ENCODE measurements at regions of chr3 and their contacts with region 1.

Region 1: DNA sequence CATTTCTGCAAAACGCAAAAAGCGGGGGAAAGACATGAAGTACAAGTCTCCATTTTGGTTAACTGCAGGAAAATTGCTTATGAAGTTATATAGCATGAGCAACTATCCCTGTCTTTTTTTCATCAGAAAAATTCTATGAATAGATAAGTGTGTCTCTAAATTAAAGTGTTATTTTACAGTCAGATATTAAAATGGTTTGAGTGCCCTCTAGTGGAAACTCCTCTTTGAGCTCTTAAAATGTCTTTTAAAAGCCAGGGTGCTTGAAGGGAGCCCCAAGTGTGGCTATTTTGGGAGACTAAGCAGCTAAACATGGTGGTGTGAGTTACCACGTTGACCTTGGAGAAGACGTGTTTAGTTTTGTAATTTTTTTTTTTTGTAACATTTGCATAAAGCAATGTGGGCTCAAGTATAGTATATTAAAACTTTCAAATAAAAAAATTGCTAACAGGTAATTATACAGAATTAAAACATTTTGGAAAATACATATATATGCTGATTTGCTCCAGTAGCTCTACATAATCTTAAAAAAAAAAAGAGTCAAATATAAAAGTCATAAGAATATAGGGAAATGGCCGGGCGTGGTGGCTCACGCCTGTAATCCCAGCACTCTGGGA is 77.2 kb downstream of the PPP2R3A start:
- DNase-seq: no peak
- ATAC-seq: peak; percentile 44

Region 2: GRCh38 chr3:135918580-135918962 is 124.1 kb before region 1 on chr3:
- intact Hi-C with region 1: loop called (anchors 5 kb)
- DNase-seq: no peak
- ATAC-seq: peak; percentile 82

Region 3: DNA sequence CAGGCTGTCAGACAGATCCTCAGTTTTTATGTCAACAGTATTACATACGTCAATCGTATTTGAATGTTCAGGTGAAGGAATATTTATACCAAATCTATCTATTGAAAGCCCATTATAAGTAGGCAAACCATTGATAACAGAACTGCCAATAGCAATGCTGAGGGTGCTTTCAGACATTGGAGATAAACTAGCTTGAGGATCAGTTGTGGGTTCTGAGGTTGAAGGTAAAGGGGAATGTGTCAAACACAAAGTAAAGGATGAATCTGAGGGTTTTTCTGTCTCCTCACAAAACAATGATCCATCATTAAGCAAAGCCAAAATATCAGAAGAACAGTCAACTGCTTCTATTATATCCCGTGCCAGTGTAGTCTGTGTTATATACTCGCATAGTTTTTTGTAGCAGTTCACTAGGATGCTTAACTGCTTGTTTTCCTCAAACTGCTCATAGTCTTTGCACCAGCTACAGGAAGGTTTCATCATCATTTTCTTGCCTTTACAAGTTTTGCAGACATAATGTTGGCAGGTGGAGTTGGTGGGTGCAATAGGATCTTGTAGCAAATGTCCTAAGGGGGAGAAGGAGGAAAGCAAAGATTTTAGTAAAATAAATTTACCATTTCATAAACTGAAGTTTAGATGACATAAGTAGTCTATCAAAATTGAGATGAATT is 109.6 kb after region 1 on chr3:
- intact Hi-C with region 1: no loop called
- DNase-seq: no peak
- ATAC-seq: no peak

Region 4: DNA sequence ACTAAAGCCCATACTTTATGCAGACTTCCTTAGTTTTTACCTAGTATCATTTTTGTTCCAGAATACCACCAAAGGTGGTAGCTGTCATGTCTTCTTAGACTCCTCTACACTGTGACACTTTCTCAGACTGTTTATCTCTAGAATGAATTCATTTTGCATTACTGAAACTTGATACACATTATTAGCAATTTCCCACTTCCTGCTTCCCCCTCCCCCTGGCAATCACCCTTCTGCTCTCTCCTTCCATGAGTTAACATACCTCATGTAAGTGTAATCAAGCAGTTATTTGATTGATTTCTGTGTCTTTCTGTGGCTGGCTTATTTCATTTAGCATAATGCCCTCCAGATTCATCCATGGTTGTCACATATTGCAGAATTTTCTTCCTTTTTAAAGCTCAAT is 504.6 kb after region 1 on chr3:
- intact Hi-C with region 1: no loop called
- DNase-seq: no peak
- ATAC-seq: no peak